SK-N-SH (cell line): ENCODE measurements at regions of chr11 and their contacts with region 1.

Region 1: GRCh38 chr11:124673333-124674167 is at the starts of genes SIAE and SPA17:
- DNase-seq: peak; percentile 97
- H3K4me3 ChIP-seq: peak within 1 kb of the TSS; percentile 87 to 89
- H3K27ac ChIP-seq: peak within 1 kb of the TSS; percentile 87 to 88
- H3K4me1 ChIP-seq: peaks cover 0 to 11% of the 10 kb centered on the region in 2 experiments; a peak in 1 of 4 replicates
- H3K27me3 ChIP-seq: no peaks in the 10 kb centered on the region
- CTCF ChIP-seq: no peak
- EP300 ChIP-seq: peak in 1 of 2 experiments; percentile 48; a peak in 1 of 4 replicates
- RAD21 ChIP-seq: no peak
- polyA plus RNA-seq, gene SIAE: 27.9 and 47.0 TPM in 2 replicates
- polyA plus RNA-seq, gene SPA17: 7.7 and 11.7 TPM in 2 replicates

Region 2: DNA sequence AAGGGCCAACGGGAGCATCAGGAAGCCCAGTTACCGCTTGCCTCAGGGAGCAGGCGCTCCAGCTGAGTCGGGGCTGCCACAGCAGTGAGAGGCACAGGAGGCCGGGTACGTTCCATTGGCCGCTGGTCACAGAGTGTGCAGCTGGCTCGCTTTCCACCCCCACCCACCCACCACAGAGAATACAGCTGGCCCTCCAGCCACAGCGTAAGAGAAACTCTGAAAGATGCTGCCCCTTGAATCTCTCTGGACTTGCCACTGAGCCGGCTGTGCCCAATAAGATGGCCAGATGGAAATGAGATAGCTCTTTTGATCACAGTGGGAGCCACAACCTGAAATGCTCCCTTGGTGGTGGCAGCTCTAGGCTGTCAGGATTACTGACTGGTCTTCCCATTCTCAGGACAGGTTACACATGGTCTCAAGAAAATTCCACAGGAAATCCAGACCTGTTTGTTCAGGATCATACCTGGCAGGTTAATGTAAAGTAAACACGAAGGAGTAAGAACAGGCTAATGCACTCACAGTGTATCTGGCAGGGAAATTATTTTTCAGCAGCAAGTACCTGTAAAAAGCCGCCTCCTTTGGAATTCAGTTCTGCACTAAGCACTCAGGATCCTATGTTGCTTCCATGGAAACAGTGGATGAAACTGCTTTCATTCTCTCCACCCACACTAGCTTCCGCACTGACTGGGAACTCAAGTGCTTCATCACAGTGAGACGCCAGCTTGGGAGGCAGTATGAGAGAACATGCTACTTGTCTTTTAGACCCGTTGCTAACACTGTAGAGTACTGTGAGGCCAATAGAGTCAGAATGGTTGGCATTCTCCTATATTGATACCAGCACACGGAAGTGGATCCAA is 16.5 kb before region 1 on chr11:
- CTCF ChIA-PET with region 1: interaction called, 13 read pairs
- POLR2A ChIA-PET with region 1: interaction called, 3 read pairs
- DNase-seq: peak; percentile 52
- H3K4me3 ChIP-seq: no peak overlapping the region
- H3K27ac ChIP-seq: no peak overlapping the region
- H3K4me1 ChIP-seq: peaks cover 4 to 5% of the 10 kb centered on the region in 2 experiments; a peak in 2 of 4 replicates
- H3K27me3 ChIP-seq: no peaks in the 10 kb centered on the region
- CTCF ChIP-seq: no peak
- EP300 ChIP-seq: no peak
- RAD21 ChIP-seq: no peak

Region 3: GRCh38 chr11:124778281-124778680 is 104.7 kb after region 1 on chr11:
- CTCF ChIA-PET with region 1: interaction called, 11 read pairs
- POLR2A ChIA-PET with region 1: no interaction called
- DNase-seq: peak; percentile 16
- H3K4me3 ChIP-seq: no peak overlapping the region
- H3K27ac ChIP-seq: no peak overlapping the region
- H3K4me1 ChIP-seq: no peaks in the 10 kb centered on the region
- H3K27me3 ChIP-seq: no peaks in the 10 kb centered on the region
- CTCF ChIP-seq: peak; percentile 35
- EP300 ChIP-seq: no peak
- RAD21 ChIP-seq: no peak

Region 4: GRCh38 chr11:124800226-124800929 is 126.8 kb after region 1 on chr11 and contains the start of gene MSANTD2:
- CTCF ChIA-PET with region 1: interaction called, 70 read pairs
- POLR2A ChIA-PET with region 1: interaction called, 4 read pairs
- DNase-seq: peak; percentile 93
- H3K4me3 ChIP-seq: peak within 1 kb of the TSS; percentile 68 to 70
- H3K27ac ChIP-seq: peak within 1 kb of the TSS; percentile 95 to 97
- H3K4me1 ChIP-seq: peaks cover 8 to 10% of the 10 kb centered on the region in 2 experiments; a peak in 3 of 4 replicates
- H3K27me3 ChIP-seq: no peaks in the 10 kb centered on the region
- CTCF ChIP-seq: no peak
- EP300 ChIP-seq: 0 out of 4 replicates have a peak, but pooled peaks of 1 of the 2 experiments have one; percentile 8
- RAD21 ChIP-seq: 0 out of 2 replicates have a peak, but pooled peaks have one; percentile 2
- polyA plus RNA-seq, gene MSANTD2: 6.4 and 8.5 TPM in 2 replicates